ENCODE measurements at regions of chr4 and their contacts with region 1.

Region 1: GRCh38 chr4:169810325-169811323 is 52.9 kb upstream of the HPF1 start:
- DNase-seq: peak; percentile 84
- H3K4me3 ChIP-seq: no peak overlapping the region
- H3K27ac ChIP-seq: no peak overlapping the region
- H3K4me1 ChIP-seq: peaks cover 4% of the 10 kb centered on the region
- H3K27me3 ChIP-seq: no peaks in the 10 kb centered on the region
- CTCF ChIP-seq: peak; percentile 85

Region 2: DNA sequence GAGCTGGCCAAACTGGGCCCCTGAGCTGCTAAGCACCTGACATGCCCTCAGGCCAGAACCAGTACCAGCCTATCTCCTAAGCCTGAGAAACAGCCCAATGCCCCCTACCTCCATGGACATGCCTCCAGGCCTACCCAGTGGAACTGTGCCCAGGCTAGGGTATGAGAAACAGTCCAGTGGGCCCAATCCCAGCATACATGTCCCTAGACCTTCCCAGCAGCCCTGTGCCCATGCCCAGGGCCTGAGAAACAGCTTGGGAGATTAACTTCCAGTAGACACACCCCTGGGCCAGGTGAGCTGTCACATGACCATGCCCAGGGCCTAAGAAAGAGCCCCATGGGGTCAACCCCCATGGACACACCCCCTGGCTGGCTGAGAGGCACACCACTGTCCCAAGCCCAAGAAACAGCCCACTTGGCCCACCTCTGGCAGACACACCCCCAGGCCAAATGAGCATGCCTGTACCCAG is 879.4 kb before region 1 on chr4:
- CTCF ChIA-PET with region 1: no interaction called
- POLR2A ChIA-PET with region 1: no interaction called
- intact Hi-C with region 1: no loop called
- DNase-seq: no peak
- H3K4me3 ChIP-seq: no peak overlapping the region
- H3K27ac ChIP-seq: no peak overlapping the region
- H3K4me1 ChIP-seq: no peaks in the 10 kb centered on the region
- H3K27me3 ChIP-seq: no peaks in the 10 kb centered on the region
- CTCF ChIP-seq: no peak

Region 3: DNA sequence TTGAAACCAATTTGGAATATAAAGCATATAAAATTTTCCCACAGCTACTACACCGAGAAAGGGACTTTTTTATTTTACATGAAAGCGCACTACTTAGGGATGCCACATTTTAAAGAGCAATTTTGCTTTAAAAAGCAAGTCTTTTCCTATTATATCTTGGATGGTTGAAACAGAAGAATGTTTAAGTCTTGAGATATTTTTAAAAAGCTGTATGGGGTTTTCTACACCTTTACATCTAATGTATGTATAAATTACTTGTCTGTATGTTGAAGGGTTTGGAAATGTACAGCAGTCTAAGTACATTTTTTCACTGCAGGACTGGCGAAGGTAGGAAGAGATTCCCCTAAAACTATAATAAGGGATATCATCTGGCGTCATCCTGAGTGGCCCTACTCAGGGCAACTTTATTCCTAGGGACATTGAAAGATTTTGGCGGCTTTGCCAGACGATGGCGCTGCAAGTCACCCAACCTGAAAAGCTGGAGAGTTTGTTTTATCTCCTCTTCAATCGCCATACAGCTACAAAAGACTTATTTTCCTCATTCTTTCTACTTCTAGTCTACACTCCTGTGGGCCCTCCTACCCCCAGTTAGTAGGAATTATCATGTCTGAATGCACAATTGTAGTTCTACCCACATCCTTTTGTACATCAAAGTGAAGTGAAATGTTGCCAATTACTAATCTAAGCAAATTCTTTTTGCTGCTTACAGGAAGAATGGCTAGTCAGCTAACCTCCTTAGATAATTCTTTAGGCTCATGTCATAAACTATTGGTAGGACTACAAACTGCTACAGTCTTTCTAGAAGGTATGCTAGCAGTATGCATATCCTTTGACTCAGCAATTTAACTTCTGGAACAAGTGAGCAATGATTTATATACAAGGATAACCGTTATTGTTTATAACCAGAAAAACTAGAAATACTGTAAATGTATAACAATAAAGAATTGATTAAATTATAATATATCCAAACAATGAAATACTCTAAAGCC is 197.5 kb before region 1 on chr4:
- CTCF ChIA-PET with region 1: interaction called, 9 read pairs
- POLR2A ChIA-PET with region 1: no interaction called
- intact Hi-C with region 1: loop called (anchors 2 kb)
- DNase-seq: peak; percentile 90
- H3K4me3 ChIP-seq: peak overlapping the region; percentile 88
- H3K27ac ChIP-seq: no peak overlapping the region
- H3K4me1 ChIP-seq: peaks cover 8% of the 10 kb centered on the region
- H3K27me3 ChIP-seq: no peaks in the 10 kb centered on the region
- CTCF ChIP-seq: peak; percentile 88

Region 4: GRCh38 chr4:169846396-169846795 is 35.8 kb after region 1 on chr4:
- CTCF ChIA-PET with region 1: no interaction called
- POLR2A ChIA-PET with region 1: interaction called, 13 read pairs
- intact Hi-C with region 1: no loop called
- DNase-seq: no peak
- H3K4me3 ChIP-seq: no peak overlapping the region
- H3K27ac ChIP-seq: no peak overlapping the region
- H3K4me1 ChIP-seq: peaks cover 7% of the 10 kb centered on the region
- H3K27me3 ChIP-seq: no peaks in the 10 kb centered on the region
- CTCF ChIP-seq: no peak

Region 5: GRCh38 chr4:170008371-170008770 is 197.7 kb after region 1 on chr4:
- CTCF ChIA-PET with region 1: no interaction called
- POLR2A ChIA-PET with region 1: no interaction called
- intact Hi-C with region 1: loop called (anchors 1 kb)
- DNase-seq: peak; percentile 11
- H3K4me3 ChIP-seq: no peak overlapping the region
- H3K27ac ChIP-seq: no peak overlapping the region
- H3K4me1 ChIP-seq: no peaks in the 10 kb centered on the region
- H3K27me3 ChIP-seq: no peaks in the 10 kb centered on the region
- CTCF ChIP-seq: no peak

Region 6: GRCh38 chr4:170047771-170048354 is 237.2 kb after region 1 on chr4:
- CTCF ChIA-PET with region 1: interaction called, 9 read pairs
- POLR2A ChIA-PET with region 1: no interaction called
- intact Hi-C with region 1: loop called (anchors 1 kb)
- DNase-seq: peak; percentile 75
- H3K4me3 ChIP-seq: no peak overlapping the region
- H3K27ac ChIP-seq: no peak overlapping the region
- H3K4me1 ChIP-seq: peaks cover 3% of the 10 kb centered on the region
- H3K27me3 ChIP-seq: no peaks in the 10 kb centered on the region
- CTCF ChIP-seq: peak; percentile 82

Region 7: GRCh38 chr4:170089668-170090351 is 279.2 kb after region 1 on chr4 and contains the start of gene AADAT:
- CTCF ChIA-PET with region 1: interaction called, 5 read pairs
- POLR2A ChIA-PET with region 1: no interaction called
- intact Hi-C with region 1: loop called (anchors 5 kb)
- DNase-seq: peak; percentile 70
- H3K4me3 ChIP-seq: peak within 1 kb of the TSS; percentile 57
- H3K27ac ChIP-seq: peak within 1 kb of the TSS; percentile 38
- H3K4me1 ChIP-seq: peaks cover 33% of the 10 kb centered on the region
- H3K27me3 ChIP-seq: peaks cover 29% of the 10 kb centered on the region
- CTCF ChIP-seq: peak; percentile 74
- total RNA-seq, gene AADAT: 5.4 and 5.6 TPM in 2 replicates

Measured in A673 (cell line).